Activated B cell treated with CpG ODN at 0.5 μM for 24 hours (primary cell): ENCODE measurements at regions of chr1 and their contacts with region 1.

Region 1: DNA sequence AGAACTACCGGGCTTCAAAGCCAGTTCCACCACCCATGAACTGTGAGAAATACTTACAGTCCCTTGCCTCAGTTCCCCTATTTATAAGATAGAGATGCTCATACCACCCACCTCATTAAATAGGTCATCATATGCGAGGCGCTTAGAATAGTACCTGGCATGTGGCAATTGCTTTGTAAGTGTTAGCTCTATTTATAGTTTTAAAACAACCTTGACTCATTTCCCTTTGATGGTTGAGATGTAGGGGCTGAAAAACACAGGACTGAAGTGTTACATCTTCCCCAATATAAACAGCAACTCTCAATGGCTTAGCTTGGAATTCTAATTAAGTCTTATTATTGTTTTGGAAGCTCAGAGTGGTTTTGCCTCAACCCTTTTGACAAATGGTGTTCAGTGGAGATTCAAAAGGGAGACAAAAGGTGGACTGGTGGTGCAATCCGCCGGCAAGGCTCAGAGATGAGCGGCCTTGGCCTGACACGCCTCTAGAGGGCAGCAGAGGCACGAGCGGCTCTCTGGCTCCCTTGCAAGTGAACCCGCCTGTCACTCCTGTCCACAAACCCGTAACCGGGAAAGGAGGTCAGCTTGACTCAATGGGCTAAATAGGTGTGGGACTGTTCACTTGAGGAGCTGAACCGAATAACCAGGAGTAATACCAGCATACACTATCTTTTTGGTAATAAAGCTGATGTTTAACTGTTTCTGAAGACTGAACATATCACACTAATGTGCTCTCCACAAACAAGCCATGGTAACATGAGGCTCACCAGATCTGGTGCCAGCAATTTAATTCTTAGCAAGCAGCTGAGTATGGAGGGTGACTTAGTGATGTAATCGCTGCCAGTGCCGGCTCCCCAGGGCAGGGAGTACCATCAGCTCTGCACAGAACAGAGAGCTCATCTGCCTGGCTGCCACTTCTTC is 19.5 kb upstream of the SMYD2 start:
- DNase-seq: peak; percentile 63
- ATAC-seq: peak; percentile 93
- H3K4me3 Mint-ChIP-seq: no peak overlapping the region
- H3K27ac Mint-ChIP-seq: no peak overlapping the region
- H3K4me1 Mint-ChIP-seq: no peaks in the 10 kb centered on the region
- H3K27me3 Mint-ChIP-seq: peaks cover 54% of the 10 kb centered on the region
- CTCF ChIP-seq: peak; percentile 96

Region 2: DNA sequence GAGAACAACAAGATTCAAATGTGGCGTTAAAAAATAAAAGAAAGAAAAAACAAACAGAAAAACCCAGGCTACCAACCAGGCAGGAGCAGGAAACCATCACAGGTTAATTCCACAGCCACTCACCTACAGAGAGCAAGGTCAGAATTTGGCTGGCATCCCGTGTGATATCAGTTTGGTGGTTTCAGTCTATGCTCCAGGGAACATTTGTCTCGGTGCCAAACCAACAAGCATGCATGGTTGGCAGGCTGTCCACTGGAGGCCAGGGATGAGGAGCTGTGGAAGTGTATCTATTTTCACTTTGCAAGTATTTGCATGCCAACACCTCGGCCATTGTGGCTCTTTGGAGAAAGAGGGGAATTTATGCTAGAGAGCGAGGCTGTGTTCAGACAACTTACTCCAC is 326.8 kb before region 1 on chr1:
- CTCF ChIA-PET with region 1: no interaction called
- POLR2A ChIA-PET with region 1: no interaction called
- intact Hi-C with region 1: no loop called
- DNase-seq: no peak
- ATAC-seq: no peak
- H3K4me3 Mint-ChIP-seq: no peak overlapping the region
- H3K27ac Mint-ChIP-seq: no peak overlapping the region
- H3K4me1 Mint-ChIP-seq: no peaks in the 10 kb centered on the region
- H3K27me3 Mint-ChIP-seq: no peaks in the 10 kb centered on the region
- CTCF ChIP-seq: no peak

Region 3: GRCh38 chr1:214213136-214213535 is 48.3 kb before region 1 on chr1:
- CTCF ChIA-PET with region 1: interaction called, 7 read pairs
- POLR2A ChIA-PET with region 1: no interaction called
- intact Hi-C with region 1: loop called (anchors 2 kb)
- DNase-seq: no peak
- ATAC-seq: no peak
- H3K4me3 Mint-ChIP-seq: no peak overlapping the region
- H3K27ac Mint-ChIP-seq: no peak overlapping the region
- H3K4me1 Mint-ChIP-seq: peaks cover 3% of the 10 kb centered on the region
- H3K27me3 Mint-ChIP-seq: peaks cover 4% of the 10 kb centered on the region
- CTCF ChIP-seq: no peak

Region 4: DNA sequence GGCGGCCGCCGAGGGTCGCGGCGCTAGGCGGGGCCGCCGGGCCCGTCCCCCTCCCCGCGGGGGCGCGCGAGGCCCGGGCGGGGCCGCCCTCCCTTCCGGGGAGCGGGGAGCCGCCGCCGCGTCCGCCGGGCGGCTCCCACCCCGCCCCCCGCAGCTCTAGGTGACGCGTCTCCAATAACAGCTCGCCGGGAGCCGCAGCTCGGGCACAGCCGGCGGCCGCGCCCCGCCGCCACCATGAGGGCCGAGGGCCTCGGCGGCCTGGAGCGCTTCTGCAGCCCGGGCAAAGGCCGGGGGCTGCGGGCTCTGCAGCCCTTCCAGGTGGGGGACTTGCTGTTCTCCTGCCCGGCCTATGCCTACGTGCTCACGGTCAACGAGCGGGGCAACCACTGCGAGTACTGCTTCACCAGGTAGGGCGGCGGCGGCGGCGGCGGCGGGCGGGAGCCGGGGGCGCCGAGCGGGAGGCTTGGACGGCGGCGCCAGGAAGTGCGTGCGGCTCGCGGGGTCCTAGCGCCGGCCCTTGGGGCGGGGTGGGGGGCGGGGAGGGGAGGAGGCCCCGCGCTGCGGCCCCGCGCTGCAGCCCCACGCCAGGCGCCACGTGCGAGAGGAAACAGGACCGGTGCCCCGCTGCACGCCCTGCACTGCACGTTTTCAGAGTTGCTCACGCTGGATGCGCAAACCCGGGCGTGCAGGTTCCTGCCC is 19.7 kb after region 1 on chr1 and contains the start of gene SMYD2:
- CTCF ChIA-PET with region 1: interaction called, 25 read pairs
- POLR2A ChIA-PET with region 1: no interaction called
- intact Hi-C with region 1: no loop called
- DNase-seq: peak; percentile 69
- ATAC-seq: peak; percentile 76
- H3K4me3 Mint-ChIP-seq: peak within 1 kb of the TSS; percentile 85
- H3K27ac Mint-ChIP-seq: peak within 1 kb of the TSS; percentile 76
- H3K4me1 Mint-ChIP-seq: peaks cover 23% of the 10 kb centered on the region
- H3K27me3 Mint-ChIP-seq: no peaks in the 10 kb centered on the region
- CTCF ChIP-seq: no peak
- total RNA-seq, gene SMYD2: 18.3 and 18.8 TPM in 2 replicates

Region 5: GRCh38 chr1:214632091-214632490 is 370.6 kb after region 1 on chr1:
- CTCF ChIA-PET with region 1: interaction called, 9 read pairs
- POLR2A ChIA-PET with region 1: no interaction called
- intact Hi-C with region 1: loop called (anchors 2 kb)
- DNase-seq: no peak
- ATAC-seq: no peak
- H3K4me3 Mint-ChIP-seq: no peak overlapping the region
- H3K27ac Mint-ChIP-seq: no peak overlapping the region
- H3K4me1 Mint-ChIP-seq: peaks cover 4% of the 10 kb centered on the region
- H3K27me3 Mint-ChIP-seq: no peaks in the 10 kb centered on the region
- CTCF ChIP-seq: no peak